Activated CD4-positive, alpha-beta T cell treated with anti-CD3 and anti-CD28 coated beads for 36 hours (primary cell): ENCODE measurements at regions of chrX and their contacts with region 1.

Region 1: GRCh38 chrX:41441934-41442823 is 5.0 kb upstream of the NYX start:
- DNase-seq: peak; percentile 92
- ATAC-seq: peak; percentile 94
- H3K4me3 Mint-ChIP-seq: peak overlapping the region; percentile 56
- H3K27ac Mint-ChIP-seq: peak overlapping the region; percentile 85
- H3K4me1 Mint-ChIP-seq: peaks cover 15% of the 10 kb centered on the region
- H3K27me3 Mint-ChIP-seq: no peaks in the 10 kb centered on the region

Region 2: DNA sequence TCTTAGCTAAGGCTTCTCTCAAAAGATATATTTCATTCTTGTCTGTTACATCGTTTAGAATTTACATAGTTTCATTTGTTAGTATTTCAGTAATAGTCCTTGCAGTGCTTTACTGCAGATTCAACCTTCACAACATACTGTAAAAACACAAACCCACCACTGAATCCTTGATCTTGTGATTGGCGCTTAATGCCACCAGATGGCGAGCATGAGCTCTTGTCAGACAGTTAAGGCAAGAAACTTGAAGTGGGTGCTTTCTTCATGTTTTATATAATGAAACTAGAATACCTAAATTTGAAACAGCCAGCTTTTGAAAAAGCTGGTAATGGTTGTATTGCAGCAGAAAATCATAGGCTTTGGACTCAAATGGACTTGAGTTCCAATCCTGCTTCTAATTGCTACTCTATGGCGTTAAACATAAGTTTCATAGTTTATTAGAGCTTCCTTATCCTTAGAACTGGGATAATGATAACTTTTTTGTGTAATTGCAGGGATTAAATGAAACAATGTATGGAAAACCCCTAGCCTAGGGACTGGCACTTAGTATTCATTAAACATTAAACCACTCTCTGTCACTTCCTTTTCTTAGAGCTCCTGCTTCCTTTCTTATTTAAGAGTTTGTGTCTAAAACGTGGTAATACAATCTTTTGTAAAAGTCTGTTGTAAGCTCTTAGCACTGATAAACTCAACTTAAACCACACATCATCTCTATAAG is 261.8 kb before region 1 on chrX:
- CTCF ChIA-PET with region 1: no interaction called
- POLR2A ChIA-PET with region 1: no interaction called
- intact Hi-C with region 1: loop called in 1 of 2 experiments (anchors 5 kb)
- DNase-seq: peak; percentile 63
- ATAC-seq: peak; percentile 88
- H3K4me3 Mint-ChIP-seq: no peak overlapping the region
- H3K27ac Mint-ChIP-seq: peak overlapping the region; percentile 85
- H3K4me1 Mint-ChIP-seq: peaks cover 34% of the 10 kb centered on the region
- H3K27me3 Mint-ChIP-seq: no peaks in the 10 kb centered on the region

Region 3: DNA sequence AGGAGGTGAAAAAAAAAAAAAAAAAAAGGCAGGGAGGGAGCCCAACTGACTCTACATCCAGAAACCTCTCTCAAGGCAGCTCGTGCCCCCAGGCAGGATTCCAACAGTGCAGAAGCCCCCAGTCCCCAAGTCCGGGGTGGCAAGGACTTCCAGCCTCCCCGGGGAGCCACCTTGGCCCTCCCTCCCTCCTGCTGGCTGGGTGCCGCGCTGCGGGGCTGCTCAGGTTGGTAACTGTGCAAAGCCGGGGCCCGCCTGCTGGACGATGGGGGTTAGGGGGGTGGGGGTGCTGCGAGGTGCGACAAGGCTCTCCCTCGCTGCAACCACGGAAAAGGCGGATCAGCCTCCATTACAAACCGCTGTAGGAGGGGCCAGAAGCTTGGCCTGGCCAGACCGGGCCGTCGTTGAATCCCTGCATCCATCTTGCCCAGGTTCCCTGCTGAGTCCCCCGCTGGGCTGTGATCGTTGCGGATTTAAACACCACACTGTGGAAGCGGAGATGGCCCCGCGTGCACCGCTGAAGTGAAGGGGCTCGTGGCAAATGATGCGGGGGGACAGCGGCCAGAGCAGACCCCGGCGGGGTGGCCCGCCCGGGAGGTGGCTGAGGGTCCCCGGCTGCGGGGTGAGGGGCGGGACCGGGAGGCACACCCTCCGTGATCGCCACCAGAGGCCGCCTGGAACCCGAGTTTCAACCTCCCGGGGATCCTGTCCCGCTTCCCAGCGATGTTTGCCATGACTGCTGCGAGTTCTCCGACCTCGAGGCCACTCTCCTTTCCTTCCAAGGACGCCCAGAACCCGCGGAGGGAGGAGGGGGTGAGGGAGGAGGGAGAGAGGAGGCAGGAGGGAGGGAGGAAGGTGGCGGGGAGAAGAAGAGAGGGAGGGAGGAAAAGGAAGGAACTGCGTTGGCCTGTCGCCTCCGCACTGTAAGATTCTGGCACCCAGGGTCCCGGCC is 166.2 kb before region 1 on chrX:
- CTCF ChIA-PET with region 1: no interaction called
- POLR2A ChIA-PET with region 1: no interaction called
- intact Hi-C with region 1: loop called (anchors 1 to 5 kb)
- DNase-seq: peak; percentile 73
- ATAC-seq: peak; percentile 80
- H3K4me3 Mint-ChIP-seq: peak overlapping the region; percentile 64
- H3K27ac Mint-ChIP-seq: peak overlapping the region; percentile 70
- H3K4me1 Mint-ChIP-seq: peaks cover 4% of the 10 kb centered on the region
- H3K27me3 Mint-ChIP-seq: no peaks in the 10 kb centered on the region

Region 4: DNA sequence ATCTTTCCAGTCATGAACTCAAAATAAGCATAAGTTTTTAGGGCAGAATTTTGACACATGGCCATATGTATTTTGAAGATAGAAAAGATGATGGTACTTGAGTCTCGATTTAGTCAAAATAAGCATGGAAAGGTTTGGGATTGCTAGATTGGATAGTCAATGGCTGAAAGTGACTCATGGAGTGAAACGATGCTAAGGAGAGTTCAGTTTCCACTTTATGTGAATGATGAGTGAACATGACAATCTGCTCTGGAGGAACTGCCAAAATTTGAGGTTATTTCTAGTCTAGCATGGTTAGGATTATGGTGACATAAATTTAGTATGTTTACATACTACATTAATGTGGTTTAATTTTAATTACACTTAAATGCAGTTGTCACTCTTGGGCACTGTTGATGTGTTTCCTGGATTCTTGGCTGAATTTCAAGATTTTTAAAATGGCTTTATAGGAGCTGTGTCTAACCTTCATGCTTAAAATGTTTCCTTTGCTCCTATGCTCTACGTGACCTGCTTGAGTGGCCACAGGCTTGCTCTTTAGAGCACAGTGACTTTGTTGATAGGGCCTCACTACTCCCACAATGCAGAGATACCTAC is 91.1 kb before region 1 on chrX:
- CTCF ChIA-PET with region 1: no interaction called
- POLR2A ChIA-PET with region 1: no interaction called
- intact Hi-C with region 1: loop called in 1 of 2 experiments (anchors 1 kb)
- DNase-seq: no peak
- ATAC-seq: peak; percentile 60
- H3K4me3 Mint-ChIP-seq: no peak overlapping the region
- H3K27ac Mint-ChIP-seq: peak overlapping the region; percentile 70
- H3K4me1 Mint-ChIP-seq: peaks cover 39% of the 10 kb centered on the region
- H3K27me3 Mint-ChIP-seq: no peaks in the 10 kb centered on the region

Region 5: DNA sequence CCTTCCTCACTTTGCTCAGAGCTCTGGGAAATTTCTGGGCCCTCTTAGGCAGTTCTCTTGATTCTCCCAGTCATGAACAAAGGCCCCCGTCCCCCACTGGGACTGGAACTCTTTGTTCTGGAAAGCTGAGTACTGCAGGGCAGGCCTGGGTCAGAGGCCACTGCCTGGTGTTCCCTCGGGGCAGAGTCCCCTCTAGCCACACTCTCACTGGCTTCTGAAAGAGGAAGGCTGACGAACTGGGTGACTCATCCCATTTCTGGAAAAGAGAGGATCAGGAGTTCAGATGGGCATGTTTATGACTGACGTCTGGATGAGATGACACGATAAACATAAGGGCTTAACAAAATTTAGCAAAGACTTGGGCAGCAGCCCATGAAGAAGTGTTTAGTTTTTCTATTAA is 60.5 kb before region 1 on chrX:
- CTCF ChIA-PET with region 1: no interaction called
- POLR2A ChIA-PET with region 1: interaction called, 9 read pairs
- intact Hi-C with region 1: loop called (anchors 1 to 2 kb)
- DNase-seq: no peak
- ATAC-seq: no peak
- H3K4me3 Mint-ChIP-seq: no peak overlapping the region
- H3K27ac Mint-ChIP-seq: peak overlapping the region; percentile 13
- H3K4me1 Mint-ChIP-seq: peaks cover 36% of the 10 kb centered on the region
- H3K27me3 Mint-ChIP-seq: no peaks in the 10 kb centered on the region

Region 6: GRCh38 chrX:41512394-41512793 is 70.2 kb after region 1 on chrX:
- CTCF ChIA-PET with region 1: interaction called, 3 read pairs
- POLR2A ChIA-PET with region 1: no interaction called
- intact Hi-C with region 1: loop called in 1 of 2 experiments (anchors 1 kb)
- DNase-seq: peak; percentile 16
- ATAC-seq: peak; percentile 74
- H3K4me3 Mint-ChIP-seq: no peak overlapping the region
- H3K27ac Mint-ChIP-seq: no peak overlapping the region
- H3K4me1 Mint-ChIP-seq: peaks cover 18% of the 10 kb centered on the region
- H3K27me3 Mint-ChIP-seq: no peaks in the 10 kb centered on the region

Region 7: GRCh38 chrX:41688835-41689234 is 246.7 kb after region 1 on chrX and contains the start of gene GPR34:
- CTCF ChIA-PET with region 1: no interaction called
- POLR2A ChIA-PET with region 1: no interaction called
- intact Hi-C with region 1: no loop called
- DNase-seq: peak; percentile 46
- ATAC-seq: peak; percentile 69
- H3K4me3 Mint-ChIP-seq: no peak within 1 kb of the TSS
- H3K27ac Mint-ChIP-seq: no peak within 1 kb of the TSS
- H3K4me1 Mint-ChIP-seq: peaks cover 35% of the 10 kb centered on the region
- H3K27me3 Mint-ChIP-seq: no peaks in the 10 kb centered on the region
- total RNA-seq, gene GPR34: 0.12 TPM in 1 of 2 experiments, not detected in the other

Region 8: DNA sequence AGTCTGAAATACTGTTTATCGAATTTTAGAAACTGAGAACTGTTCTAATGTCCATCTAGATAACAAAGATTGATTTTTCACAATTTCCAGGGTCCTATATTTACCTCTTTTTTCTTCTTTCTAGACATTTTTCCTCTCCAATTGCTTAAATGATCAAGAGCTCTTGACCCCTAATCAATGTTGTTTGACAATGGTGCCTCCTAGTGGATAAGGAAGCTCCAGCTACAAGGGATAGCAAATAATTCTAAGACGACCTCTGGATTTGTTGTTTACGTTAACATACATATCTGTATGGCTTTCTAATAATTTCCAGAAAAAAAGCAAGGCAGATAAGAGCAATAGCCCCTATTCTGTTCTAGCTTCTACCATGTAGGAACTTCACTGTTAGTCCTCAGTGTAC is 317.6 kb after region 1 on chrX:
- CTCF ChIA-PET with region 1: no interaction called
- POLR2A ChIA-PET with region 1: no interaction called
- intact Hi-C with region 1: loop called in 1 of 2 experiments (anchors 10 kb)
- DNase-seq: no peak
- ATAC-seq: no peak
- H3K4me3 Mint-ChIP-seq: no peak overlapping the region
- H3K27ac Mint-ChIP-seq: no peak overlapping the region
- H3K4me1 Mint-ChIP-seq: peaks cover 3% of the 10 kb centered on the region
- H3K27me3 Mint-ChIP-seq: no peaks in the 10 kb centered on the region